Right cardiac atrium (tissue), 5 donors: ENCODE measurements at regions of chr19 and their contacts with region 1.

Region 1: GRCh38 chr19:46076951-46077816 is 36.4 kb upstream of the IGFL4 start:
- DNase-seq: peak in 1 of 3 donors; percentile 22
- ATAC-seq: peak; percentile 73 to 86
- H3K4me3 ChIP-seq: no peak overlapping the region
- H3K27ac ChIP-seq: no peak overlapping the region
- H3K4me1 ChIP-seq: no peaks in the 10 kb centered on the region
- H3K27me3 ChIP-seq: peaks cover 4% of the 10 kb centered on the region

Region 2: GRCh38 chr19:46009530-46010510 is 67.4 kb before region 1 on chr19:
- intact Hi-C with region 1: no loop called
- DNase-seq: peak; percentile 59 to 80 (median 78)
- ATAC-seq: peak; percentile 69 to 82
- H3K4me3 ChIP-seq: no peak overlapping the region
- H3K27ac ChIP-seq: no peak overlapping the region
- H3K4me1 ChIP-seq: peaks cover 1% of the 10 kb centered on the region
- H3K27me3 ChIP-seq: no peaks in the 10 kb centered on the region

Region 3: DNA sequence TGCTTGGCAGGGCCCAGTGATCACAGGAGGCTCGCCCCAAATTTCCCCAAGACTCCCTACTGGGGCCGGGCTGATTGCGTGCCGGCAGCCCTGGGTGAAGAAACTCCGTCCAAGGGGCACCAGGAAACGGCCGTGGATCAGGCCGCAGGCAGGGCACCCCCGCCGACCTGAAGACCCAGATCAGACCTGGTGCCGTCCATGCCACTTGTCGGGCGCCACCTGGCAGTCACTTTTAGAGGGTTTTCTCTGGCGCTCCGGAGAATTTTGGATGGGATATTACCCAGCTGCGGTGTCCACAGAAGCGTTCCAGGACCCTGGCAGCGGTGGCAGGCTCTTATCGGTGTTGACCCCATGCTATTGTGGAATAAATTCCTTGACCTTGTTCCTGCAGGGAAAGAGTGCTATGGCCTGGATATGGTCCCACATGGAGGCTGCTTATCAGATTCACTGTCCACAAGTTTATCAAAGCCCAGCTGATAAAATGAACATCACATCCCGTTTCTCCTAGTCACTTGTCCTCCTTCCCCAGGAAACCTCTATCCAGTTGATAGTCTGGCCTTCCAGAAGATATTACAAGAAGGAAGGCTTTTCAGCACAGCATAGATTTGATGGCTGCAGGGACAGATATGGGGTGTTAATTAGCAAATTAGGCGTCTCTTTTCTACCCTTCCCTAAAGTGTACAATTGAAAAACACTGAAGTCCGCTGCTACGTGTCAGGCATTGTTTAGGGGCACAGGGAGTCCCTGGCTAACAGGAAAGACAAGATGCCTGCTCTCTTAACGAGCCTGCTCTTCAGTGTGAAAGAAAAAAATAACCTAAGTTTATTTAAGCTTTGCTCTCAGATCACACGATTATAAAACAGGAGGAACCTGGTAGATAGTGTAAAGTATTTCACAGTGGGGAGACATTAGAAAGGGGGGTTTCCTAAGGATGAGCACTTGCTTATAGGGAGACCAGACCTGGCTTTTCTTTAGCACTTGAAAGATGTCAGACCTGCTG is 109.2 kb after region 1 on chr19:
- intact Hi-C with region 1: loop called (anchors 5 kb)
- DNase-seq: peak in 2 of 3 donors; percentile 52 to 62
- ATAC-seq: peak; percentile 33 to 34
- H3K4me3 ChIP-seq: no peak overlapping the region
- H3K27ac ChIP-seq: no peak overlapping the region
- H3K4me1 ChIP-seq: no peaks in the 10 kb centered on the region
- H3K27me3 ChIP-seq: no peaks in the 10 kb centered on the region

Region 4: DNA sequence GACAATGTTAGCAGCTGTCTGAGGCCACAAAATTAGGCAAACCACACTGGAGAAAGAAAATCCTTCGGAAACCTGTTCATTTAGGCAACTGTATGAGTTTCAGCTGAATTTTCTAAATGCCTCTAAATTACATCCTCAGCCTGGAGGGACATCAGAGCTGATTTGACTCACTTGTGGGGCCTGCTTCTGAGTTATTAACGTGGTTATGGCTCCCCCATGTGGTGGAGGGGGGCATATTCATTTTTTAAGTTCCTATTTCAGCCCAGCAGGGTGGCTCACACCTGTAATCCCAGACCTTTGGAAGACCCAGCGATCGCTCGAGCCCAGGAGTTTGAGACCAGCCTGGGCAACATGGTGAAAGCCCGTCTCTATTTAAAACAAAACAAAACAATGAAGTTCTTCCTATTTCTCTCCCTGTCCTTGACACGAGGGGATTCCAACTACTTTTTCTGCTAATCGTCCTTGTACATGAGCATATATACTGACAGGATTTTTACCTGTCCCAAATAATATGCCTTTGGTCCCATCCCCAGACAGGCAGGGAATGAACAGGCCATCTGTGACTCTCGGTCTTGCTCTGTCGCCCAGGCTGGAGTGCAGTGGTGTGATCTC is 188.1 kb after region 1 on chr19:
- intact Hi-C with region 1: loop called in 3 of 4 experiments (anchors 2 to 10 kb)
- DNase-seq: peak in 1 of 3 donors; percentile 42
- ATAC-seq: peak; percentile 67 to 85
- H3K4me3 ChIP-seq: no peak overlapping the region
- H3K27ac ChIP-seq: no peak overlapping the region
- H3K4me1 ChIP-seq: no peaks in the 10 kb centered on the region
- H3K27me3 ChIP-seq: no peaks in the 10 kb centered on the region